Uterus (tissue), 4 donors: ENCODE measurements at regions of chr2 and their contacts with region 1.

Region 1: DNA sequence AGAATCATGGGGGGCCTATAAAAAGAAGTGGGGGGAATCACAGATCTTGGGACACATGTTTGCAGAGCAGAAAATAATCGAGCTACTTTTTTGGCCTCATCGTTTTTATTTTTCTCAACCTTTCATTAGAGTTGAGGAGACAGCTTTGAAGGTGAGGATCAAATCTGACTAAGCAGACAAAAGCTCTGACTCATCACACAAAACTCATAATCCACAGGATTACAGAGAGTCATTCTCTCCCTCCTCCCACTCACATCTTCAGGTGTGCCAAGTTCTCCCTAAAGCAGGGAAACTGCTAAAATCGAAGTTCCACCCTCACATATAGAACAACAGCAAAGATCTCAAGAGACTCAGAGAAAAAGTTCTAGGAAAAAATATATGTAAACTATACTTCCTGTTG is 15.6 kb downstream of the BAZ2B start:
- DNase-seq: no peak
- H3K4me3 ChIP-seq: no peak overlapping the region
- H3K27ac ChIP-seq: peak overlapping the region; percentile 16 to 24
- H3K4me1 ChIP-seq: no peaks in the 10 kb centered on the region
- H3K27me3 ChIP-seq: no peaks in the 10 kb centered on the region
- CTCF ChIP-seq: no peak
- POLR2A ChIP-seq: no peak

Region 2: DNA sequence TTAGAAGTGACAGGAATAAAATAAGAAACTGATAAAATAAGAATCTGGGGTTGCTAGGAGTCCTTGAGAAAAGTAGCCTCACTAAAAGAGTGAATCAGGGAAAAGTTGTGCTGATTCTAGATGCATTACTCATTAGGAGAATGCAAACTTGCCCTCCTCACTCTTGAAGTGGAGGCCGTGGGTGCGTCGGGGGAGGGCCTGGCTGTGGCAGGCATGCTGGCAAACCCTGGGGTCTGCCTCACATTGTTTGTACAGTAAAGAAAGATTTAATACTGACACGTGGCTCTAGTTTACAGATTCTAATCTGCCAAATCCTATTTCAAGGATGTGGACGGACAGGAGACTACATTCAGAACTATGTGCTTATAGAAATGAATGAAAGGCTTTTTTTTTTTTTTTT is 590.4 kb before region 1 on chr2:
- intact Hi-C with region 1: no loop called
- DNase-seq: no peak
- H3K4me3 ChIP-seq: no peak overlapping the region
- H3K27ac ChIP-seq: peak overlapping the region in 1 of 2 donors; percentile 52
- H3K4me1 ChIP-seq: peaks cover 3 to 8% of the 10 kb centered on the region in 2 donors
- H3K27me3 ChIP-seq: no peaks in the 10 kb centered on the region
- CTCF ChIP-seq: no peak
- POLR2A ChIP-seq: no peak

Region 3: GRCh38 chr2:159712143-159712928 is 111.6 kb after region 1 on chr2 and contains the start of gene MARCHF7:
- intact Hi-C with region 1: loop called (anchors 5 kb)
- DNase-seq: peak; percentile 93 to 95
- H3K4me3 ChIP-seq: peak within 1 kb of the TSS; percentile 80 to 82
- H3K27ac ChIP-seq: peak within 1 kb of the TSS; percentile 91 to 93
- H3K4me1 ChIP-seq: peaks cover 0 to 6% of the 10 kb centered on the region in 2 donors
- H3K27me3 ChIP-seq: no peaks in the 10 kb centered on the region
- CTCF ChIP-seq: peak; percentile 36 to 64 (median 52)
- POLR2A ChIP-seq: peak; percentile 86 to 89
- total RNA-seq, gene MARCHF7: 115 to 279 (median 165) TPM